ENCODE measurements at regions of chr6 and their contacts with region 1.

Region 1: DNA sequence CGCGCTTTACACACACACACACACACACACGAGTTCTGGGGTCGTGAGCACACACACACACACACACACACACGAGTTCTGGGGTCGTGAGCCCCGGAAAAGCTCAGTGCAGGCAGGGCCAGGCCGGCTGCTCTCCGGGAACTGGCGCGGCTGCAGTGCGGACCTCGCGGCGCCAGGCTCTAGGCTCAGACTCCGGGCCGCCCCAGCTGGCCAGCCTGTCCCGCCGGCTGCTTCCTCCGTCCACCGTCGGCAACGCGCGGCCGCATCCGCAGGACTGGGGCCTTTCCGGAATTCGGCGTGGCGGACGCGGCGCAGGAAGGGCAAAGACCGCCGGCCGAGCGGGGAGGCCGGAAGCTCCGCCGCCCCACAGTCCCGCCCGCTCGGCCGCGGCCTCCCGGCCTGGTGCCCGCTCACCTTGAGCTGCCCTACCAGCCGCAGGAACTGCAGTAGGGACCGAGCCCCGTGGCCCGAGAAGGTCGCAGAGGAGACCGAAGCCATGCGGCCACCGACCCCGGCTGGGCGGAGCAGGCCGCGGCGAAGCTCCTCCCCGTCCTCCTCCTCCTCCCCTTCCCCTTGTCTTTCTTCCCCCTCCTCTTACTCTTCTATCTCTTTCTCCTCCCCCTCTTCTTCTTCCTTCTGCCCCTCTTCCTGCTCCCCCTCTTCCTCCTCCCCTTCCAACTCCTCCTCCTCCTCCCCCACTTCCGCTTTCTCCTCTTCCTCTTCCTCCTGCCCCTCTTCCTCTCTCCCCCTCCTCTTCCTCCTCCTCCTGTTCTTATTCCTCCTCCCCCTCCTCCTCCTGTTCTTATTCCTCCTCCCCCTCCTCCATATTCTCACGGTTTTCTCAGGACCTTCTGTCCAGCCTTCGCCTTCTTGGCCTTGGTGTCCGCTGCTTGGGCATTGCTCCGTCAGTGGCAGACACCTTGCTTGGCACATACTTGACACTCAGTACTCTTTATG is at the start of gene HDDC2:
- DNase-seq: peak; percentile 28
- H3K4me3 Mint-ChIP-seq: peak within 1 kb of the TSS; percentile 93
- H3K27ac Mint-ChIP-seq: peak within 1 kb of the TSS; percentile 91
- H3K4me1 Mint-ChIP-seq: peaks cover 33% of the 10 kb centered on the region
- H3K27me3 Mint-ChIP-seq: peaks cover 26% of the 10 kb centered on the region
- total RNA-seq, gene HDDC2: 78.3 and 80.7 TPM in 2 replicates

Region 2: GRCh38 chr6:125153391-125154117 is 148.2 kb before region 1 on chr6 and contains the start of gene TPD52L1:
- intact Hi-C with region 1: loop called (anchors 5 kb)
- DNase-seq: peak; percentile 37
- H3K4me3 Mint-ChIP-seq: peak within 1 kb of the TSS; percentile 52
- H3K27ac Mint-ChIP-seq: no peak within 1 kb of the TSS
- H3K4me1 Mint-ChIP-seq: peaks cover 3% of the 10 kb centered on the region
- H3K27me3 Mint-ChIP-seq: peaks cover 49% of the 10 kb centered on the region
- total RNA-seq, gene TPD52L1: not detected in 2 replicates

Region 3: DNA sequence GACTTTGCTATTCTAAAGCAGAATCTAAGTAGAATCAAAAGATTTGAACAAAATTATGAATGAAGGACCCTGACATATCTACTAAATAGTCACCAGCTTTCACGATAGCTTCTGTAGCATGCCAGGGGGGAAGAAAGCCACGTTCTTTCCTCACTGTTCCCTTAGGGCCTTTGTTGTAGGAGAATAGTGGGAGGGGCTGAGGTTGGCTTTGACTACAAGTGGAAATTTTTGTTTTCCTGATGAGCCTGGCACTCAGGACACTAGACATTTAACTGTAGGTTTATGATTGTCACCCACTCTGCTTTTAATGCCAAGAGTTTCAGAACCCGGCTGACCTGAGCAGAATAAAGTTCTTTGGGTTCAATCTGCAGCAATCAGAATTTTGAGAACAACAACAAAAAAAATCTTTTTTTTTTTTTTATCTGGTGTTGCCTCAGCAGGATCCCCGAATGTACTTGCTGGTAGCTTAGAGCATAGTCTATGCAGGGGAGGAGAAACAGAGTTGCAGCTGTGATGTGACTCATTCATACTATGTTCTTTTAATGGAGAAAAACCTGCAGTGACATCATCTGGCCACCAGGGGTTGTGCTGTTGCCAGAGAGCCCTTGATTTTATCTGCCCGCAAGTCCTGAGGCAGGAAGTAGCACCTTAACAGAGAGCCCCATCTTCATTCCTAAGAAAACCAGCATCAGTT is 109.7 kb before region 1 on chr6:
- intact Hi-C with region 1: loop called (anchors 2 kb)
- DNase-seq: peak; percentile 43
- H3K4me3 Mint-ChIP-seq: no peak overlapping the region
- H3K27ac Mint-ChIP-seq: no peak overlapping the region
- H3K4me1 Mint-ChIP-seq: peaks cover 4% of the 10 kb centered on the region
- H3K27me3 Mint-ChIP-seq: peaks cover 3% of the 10 kb centered on the region

Region 4: DNA sequence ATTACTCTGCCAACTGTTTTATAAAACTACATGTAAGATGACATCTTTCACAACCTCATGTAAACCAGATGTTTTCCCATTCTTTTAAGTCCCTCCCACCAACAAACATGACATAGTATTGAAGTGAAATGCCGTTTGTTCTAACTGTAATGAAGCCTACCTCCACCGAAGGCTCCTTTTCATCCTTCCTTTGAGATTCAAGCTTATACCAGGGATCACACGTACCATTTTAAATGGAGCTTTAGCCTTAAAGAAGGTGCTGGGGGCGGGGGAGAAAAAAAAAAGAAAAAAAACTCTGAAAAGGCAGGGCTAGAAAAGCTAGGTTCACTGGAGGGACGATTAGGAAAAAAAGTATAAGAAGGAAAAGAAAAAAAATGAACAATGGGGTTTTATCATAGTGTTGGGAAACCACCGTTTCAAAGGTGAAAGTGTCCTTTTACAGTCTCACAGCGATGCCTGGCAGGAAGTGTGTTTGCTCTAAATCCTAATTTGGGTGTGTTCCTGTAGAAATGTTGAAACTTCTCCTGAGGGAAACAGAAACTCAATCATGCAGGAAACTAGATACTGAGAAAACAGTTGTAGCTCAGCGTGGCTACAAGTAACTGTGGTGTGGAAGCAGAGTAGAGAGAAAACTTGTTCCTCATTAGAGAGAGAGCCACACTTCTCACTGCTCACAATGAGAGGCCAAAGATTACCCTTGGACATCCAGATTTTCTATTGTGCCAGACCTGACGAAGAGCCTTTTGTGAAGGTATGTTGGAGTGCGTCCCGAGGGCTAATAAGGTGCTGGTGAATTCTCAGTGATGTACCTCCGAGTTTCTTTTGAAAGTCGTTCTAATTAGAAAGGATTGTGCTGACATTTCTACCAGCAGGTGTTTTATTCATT is 617.2 kb after region 1 on chr6:
- intact Hi-C with region 1: loop called (anchors 10 kb)
- DNase-seq: peak; percentile 48
- H3K4me3 Mint-ChIP-seq: peak overlapping the region; percentile 82
- H3K27ac Mint-ChIP-seq: peak overlapping the region; percentile 88
- H3K4me1 Mint-ChIP-seq: peaks cover 46% of the 10 kb centered on the region
- H3K27me3 Mint-ChIP-seq: no peaks in the 10 kb centered on the region

Measured in activated T-helper 2 cell treated with anti-CD3 and anti-CD28 coated beads, Interferon-gamma antibody, Interleukin-2, Interleukin-4, amounts not matched to agents 10 μg/mL and 5 μg/mL and 100 μg/mL, durations not matched to agents 14 hours and 24 hours and 36 hours (primary cell).